B cell (primary cell): ENCODE measurements at regions of chr6 and their contacts with region 1.

Region 1: DNA sequence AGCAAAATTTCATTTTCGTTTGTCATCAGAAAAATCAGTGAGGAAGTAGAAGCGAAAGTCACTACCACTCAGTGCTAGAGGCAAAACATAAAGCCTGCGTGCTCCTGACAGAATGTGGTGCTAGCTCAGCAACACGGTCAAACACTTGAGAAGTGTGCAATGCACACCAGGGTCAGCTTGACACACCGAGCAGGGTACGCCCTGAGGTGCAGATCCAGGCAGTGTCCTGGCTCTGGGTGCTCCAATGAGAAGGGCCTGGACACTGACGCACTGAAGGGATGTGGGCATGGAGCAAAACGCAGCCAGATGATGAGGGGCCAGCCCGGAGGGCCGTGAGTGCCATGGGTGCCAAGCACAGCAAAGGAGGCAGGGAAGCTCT is 5.9 kb downstream of the RNASET2 start:
- DNase-seq: peak; percentile 76
- ATAC-seq: peak; percentile 22
- H3K4me3 ChIP-seq: peak overlapping the region; percentile 1 to 60 (median 24)
- H3K4me3 Mint-ChIP-seq: peak overlapping the region; percentile 94
- H3K27ac ChIP-seq: peak overlapping the region; percentile 82 to 94
- H3K27ac Mint-ChIP-seq: peak overlapping the region; percentile 98
- H3K4me1 ChIP-seq: peaks cover 62 to 69% of the 10 kb centered on the region in 2 donors
- H3K4me1 Mint-ChIP-seq: peaks cover 60% of the 10 kb centered on the region
- H3K27me3 ChIP-seq: no peaks in the 10 kb centered on the region
- H3K27me3 Mint-ChIP-seq: no peaks in the 10 kb centered on the region
- CTCF ChIP-seq: no peak

Region 2: DNA sequence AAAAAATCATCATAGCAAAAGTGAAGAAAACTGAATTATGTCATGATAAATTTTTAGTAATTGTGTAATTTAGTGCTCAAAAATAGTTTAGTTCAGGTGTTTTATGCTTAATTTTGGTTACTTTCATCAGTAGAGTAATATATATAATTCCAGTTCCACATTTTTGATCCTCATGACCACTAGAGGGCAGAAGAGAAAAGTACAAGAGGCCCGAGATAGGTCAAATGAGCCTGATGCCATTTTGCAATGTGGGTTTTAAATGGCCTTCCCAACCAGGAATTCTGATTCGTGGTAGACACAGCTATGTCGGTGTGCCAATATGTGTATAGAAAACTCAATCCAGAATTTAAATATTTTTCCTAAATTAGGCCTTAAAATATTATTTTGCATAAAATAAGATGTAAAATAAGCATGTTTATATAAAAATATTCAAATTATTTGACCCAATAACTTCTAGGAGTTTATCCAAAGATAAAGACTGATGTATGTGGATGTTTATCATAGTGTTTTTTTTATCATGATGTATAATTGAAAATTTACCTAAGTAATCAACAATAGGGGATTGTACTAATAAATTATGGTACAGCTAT is 163.6 kb before region 1 on chr6:
- CTCF ChIA-PET with region 1: interaction called, 5 read pairs
- POLR2A ChIA-PET with region 1: interaction called, 7 read pairs
- intact Hi-C with region 1: loop called (anchors 2 kb)
- DNase-seq: peak; percentile 80
- ATAC-seq: peak; percentile 54
- H3K4me3 ChIP-seq: no peak overlapping the region
- H3K4me3 Mint-ChIP-seq: no peak overlapping the region
- H3K27ac ChIP-seq: no peak overlapping the region
- H3K27ac Mint-ChIP-seq: no peak overlapping the region
- H3K4me1 ChIP-seq: no peaks in the 10 kb centered on the region
- H3K4me1 Mint-ChIP-seq: no peaks in the 10 kb centered on the region
- H3K27me3 ChIP-seq: no peaks in the 10 kb centered on the region
- H3K27me3 Mint-ChIP-seq: no peaks in the 10 kb centered on the region
- CTCF ChIP-seq: peak; percentile 88

Region 3: DNA sequence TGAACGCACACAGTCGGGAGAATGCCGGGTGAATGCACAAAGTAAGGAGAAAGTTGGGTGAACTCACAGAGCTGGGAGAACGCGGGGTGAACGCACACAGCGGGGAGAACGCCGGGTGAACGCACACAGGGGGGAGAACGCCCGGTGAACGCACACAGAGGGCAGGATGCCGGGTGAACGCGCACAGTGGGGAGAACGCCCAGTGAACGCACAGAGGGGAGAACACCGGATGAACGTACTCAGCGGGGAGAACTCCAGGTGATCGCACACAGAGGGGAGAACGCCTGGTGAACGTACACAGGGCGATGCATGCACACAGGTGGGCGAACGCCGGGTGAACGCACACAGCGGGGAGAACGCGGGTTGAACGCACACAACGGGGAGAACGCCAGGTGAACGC is 51.5 kb before region 1 on chr6:
- CTCF ChIA-PET with region 1: no interaction called
- POLR2A ChIA-PET with region 1: no interaction called
- intact Hi-C with region 1: no loop called
- DNase-seq: no peak
- ATAC-seq: no peak
- H3K4me3 ChIP-seq: no peak overlapping the region
- H3K4me3 Mint-ChIP-seq: no peak overlapping the region
- H3K27ac ChIP-seq: no peak overlapping the region
- H3K27ac Mint-ChIP-seq: no peak overlapping the region
- H3K4me1 ChIP-seq: no peaks in the 10 kb centered on the region
- H3K4me1 Mint-ChIP-seq: peaks cover 2% of the 10 kb centered on the region
- H3K27me3 ChIP-seq: no peaks in the 10 kb centered on the region
- H3K27me3 Mint-ChIP-seq: no peaks in the 10 kb centered on the region
- CTCF ChIP-seq: no peak

Region 4: DNA sequence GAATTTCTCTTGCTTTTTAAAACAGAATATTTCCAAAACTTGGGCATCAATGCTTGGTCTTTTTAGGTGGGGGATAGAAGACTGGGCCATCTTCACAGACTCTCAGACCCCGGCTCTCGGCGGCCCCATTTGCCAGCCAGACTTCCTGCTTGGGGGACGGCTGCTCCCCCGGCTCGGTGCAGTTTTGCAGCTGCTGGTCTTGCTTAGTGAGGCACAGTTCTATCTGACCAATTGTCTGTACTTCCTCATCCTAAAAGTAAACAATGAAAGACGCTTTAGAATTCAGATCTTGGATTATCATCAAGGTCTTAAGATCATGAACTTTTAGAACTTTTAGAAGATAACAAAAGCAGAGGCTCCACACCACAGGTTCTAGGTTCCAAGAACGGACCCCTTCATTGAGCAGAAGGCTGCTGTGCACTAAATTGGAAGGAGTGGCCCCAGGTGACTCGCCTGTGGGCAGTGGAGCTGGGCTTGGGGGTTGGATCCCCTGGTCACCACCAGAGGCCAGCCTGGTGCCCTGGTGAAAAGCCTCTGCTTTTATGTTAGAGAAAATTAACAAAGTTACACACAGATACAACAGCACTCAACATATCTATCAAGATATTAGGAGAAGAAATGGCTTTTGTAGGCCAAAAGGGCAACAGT is 20.8 kb before region 1 on chr6:
- CTCF ChIA-PET with region 1: interaction called, 5 read pairs
- POLR2A ChIA-PET with region 1: interaction called, 14 read pairs
- intact Hi-C with region 1: no loop called
- DNase-seq: peak; percentile 32
- ATAC-seq: peak; percentile 75
- H3K4me3 ChIP-seq: peak overlapping the region in 1 of 5 experiments; percentile 8
- H3K4me3 Mint-ChIP-seq: peak overlapping the region; percentile 55
- H3K27ac ChIP-seq: peak overlapping the region; percentile 39 to 74
- H3K27ac Mint-ChIP-seq: peak overlapping the region; percentile 96
- H3K4me1 ChIP-seq: peaks cover 21 to 29% of the 10 kb centered on the region in 2 donors
- H3K4me1 Mint-ChIP-seq: peaks cover 43% of the 10 kb centered on the region
- H3K27me3 ChIP-seq: no peaks in the 10 kb centered on the region
- H3K27me3 Mint-ChIP-seq: no peaks in the 10 kb centered on the region
- CTCF ChIP-seq: no peak

Region 5: GRCh38 chr6:166936079-166936787 is 14.2 kb before region 1 on chr6:
- CTCF ChIA-PET with region 1: interaction called, 4 read pairs
- POLR2A ChIA-PET with region 1: interaction called, 6 read pairs
- intact Hi-C with region 1: loop called (anchors 1 kb)
- DNase-seq: peak; percentile 54
- ATAC-seq: peak; percentile 95
- H3K4me3 ChIP-seq: no peak overlapping the region
- H3K4me3 Mint-ChIP-seq: peak overlapping the region; percentile 21
- H3K27ac ChIP-seq: peak overlapping the region in 1 of 2 donors; percentile 55
- H3K27ac Mint-ChIP-seq: peak overlapping the region; percentile 77
- H3K4me1 ChIP-seq: peaks cover 11 to 14% of the 10 kb centered on the region in 2 donors
- H3K4me1 Mint-ChIP-seq: peaks cover 32% of the 10 kb centered on the region
- H3K27me3 ChIP-seq: no peaks in the 10 kb centered on the region
- H3K27me3 Mint-ChIP-seq: no peaks in the 10 kb centered on the region
- CTCF ChIP-seq: no peak

Region 6: DNA sequence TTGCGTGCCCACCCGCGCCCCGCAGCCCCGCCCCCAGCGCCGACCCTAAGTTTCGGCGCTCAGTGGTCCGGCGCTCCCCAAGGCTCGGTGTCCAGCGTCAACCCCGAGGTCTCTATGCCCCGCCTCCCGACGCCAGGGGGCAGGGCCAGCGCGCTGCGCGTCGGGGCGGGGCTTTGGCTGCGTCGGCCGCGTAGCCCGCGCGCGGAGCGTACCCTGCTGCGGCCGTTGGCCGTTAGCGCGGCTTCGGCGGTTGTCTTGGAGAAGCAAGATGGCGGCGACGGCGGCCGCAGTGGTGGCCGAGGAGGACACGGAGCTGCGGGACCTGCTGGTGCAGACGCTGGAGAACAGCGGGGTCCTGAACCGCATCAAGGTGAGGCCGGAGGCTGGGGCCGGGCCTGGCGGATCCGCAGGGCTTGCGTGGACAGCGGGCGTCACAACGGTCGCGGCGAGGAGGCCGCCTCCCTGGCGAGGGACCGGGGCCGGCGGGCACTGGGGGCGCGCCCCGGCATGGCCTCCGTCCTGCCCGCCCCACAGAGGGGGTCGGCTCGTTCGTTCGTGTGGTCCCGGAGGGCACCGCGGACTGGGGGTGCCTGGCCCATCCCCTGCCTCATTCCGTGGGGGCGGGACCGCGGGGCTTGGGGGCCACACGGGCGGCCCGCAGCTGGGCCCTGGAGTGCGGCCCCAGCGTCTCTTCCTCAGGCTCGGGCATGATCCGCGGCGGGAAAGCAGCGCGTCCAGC is 48.9 kb after region 1 on chr6 and contains the start of gene CEP43:
- CTCF ChIA-PET with region 1: interaction called, 5 read pairs
- POLR2A ChIA-PET with region 1: interaction called, 3 read pairs
- intact Hi-C with region 1: loop called (anchors 1 kb)
- DNase-seq: peak; percentile 98
- ATAC-seq: peak; percentile 95
- H3K4me3 ChIP-seq: peak within 1 kb of the TSS; percentile 70 to 95 (median 91)
- H3K4me3 Mint-ChIP-seq: peak within 1 kb of the TSS; percentile 91
- H3K27ac ChIP-seq: peak within 1 kb of the TSS; percentile 31 to 83
- H3K27ac Mint-ChIP-seq: peak within 1 kb of the TSS; percentile 86
- H3K4me1 ChIP-seq: peaks cover 21 to 23% of the 10 kb centered on the region in 2 donors
- H3K4me1 Mint-ChIP-seq: peaks cover 29% of the 10 kb centered on the region
- H3K27me3 ChIP-seq: no peaks in the 10 kb centered on the region
- H3K27me3 Mint-ChIP-seq: no peaks in the 10 kb centered on the region
- CTCF ChIP-seq: no peak
- total RNA-seq, gene CEP43: 33.7 and 39.7 TPM in 2 replicates

Region 7: GRCh38 chr6:167153521-167153959 is 203.1 kb after region 1 on chr6:
- CTCF ChIA-PET with region 1: interaction called, 3 read pairs
- POLR2A ChIA-PET with region 1: no interaction called
- intact Hi-C with region 1: loop called (anchors 1 kb)
- DNase-seq: peak; percentile 77
- ATAC-seq: peak; percentile 65
- H3K4me3 ChIP-seq: peak overlapping the region in 4 of 5 experiments; percentile 15 to 52 (median 37)
- H3K4me3 Mint-ChIP-seq: peak overlapping the region; percentile 86
- H3K27ac ChIP-seq: peak overlapping the region; percentile 72 to 83
- H3K27ac Mint-ChIP-seq: peak overlapping the region; percentile 89
- H3K4me1 ChIP-seq: peaks cover 44 to 55% of the 10 kb centered on the region in 2 donors
- H3K4me1 Mint-ChIP-seq: peaks cover 60% of the 10 kb centered on the region
- H3K27me3 ChIP-seq: no peaks in the 10 kb centered on the region
- H3K27me3 Mint-ChIP-seq: no peaks in the 10 kb centered on the region
- CTCF ChIP-seq: no peak